Natural killer cell (primary cell): ENCODE measurements at regions of chr4 and their contacts with region 1.

Region 1: GRCh38 chr4:176340871-176341685 is 21.3 kb downstream of the SPCS3 start:
- DNase-seq: peak in 1 of 2 donors; percentile 73
- ATAC-seq: peak; percentile 53 to 72 (median 57)
- H3K4me3 ChIP-seq: no peak overlapping the region
- H3K4me3 Mint-ChIP-seq: no peak overlapping the region
- H3K27ac ChIP-seq: no peak overlapping the region
- H3K27ac Mint-ChIP-seq: no peak overlapping the region
- H3K4me1 ChIP-seq: no peaks in the 10 kb centered on the region
- H3K4me1 Mint-ChIP-seq: peaks cover 5 to 11% of the 10 kb centered on the region in 2 donors
- H3K27me3 ChIP-seq: no peaks in the 10 kb centered on the region
- H3K27me3 Mint-ChIP-seq: no peaks in the 10 kb centered on the region
- CTCF ChIP-seq: peak; percentile 66

Region 2: GRCh38 chr4:175947117-175947722 is 393.9 kb before region 1 on chr4:
- intact Hi-C with region 1: loop called (anchors 5 kb)
- DNase-seq: peak in 1 of 2 donors; percentile 39
- ATAC-seq: no peak
- H3K4me3 ChIP-seq: no peak overlapping the region
- H3K4me3 Mint-ChIP-seq: no peak overlapping the region
- H3K27ac ChIP-seq: no peak overlapping the region
- H3K27ac Mint-ChIP-seq: no peak overlapping the region
- H3K4me1 ChIP-seq: no peaks in the 10 kb centered on the region
- H3K4me1 Mint-ChIP-seq: peaks cover 5 to 10% of the 10 kb centered on the region in 2 donors
- H3K27me3 ChIP-seq: no peaks in the 10 kb centered on the region
- H3K27me3 Mint-ChIP-seq: no peaks in the 10 kb centered on the region
- CTCF ChIP-seq: peak; percentile 65

Region 3: GRCh38 chr4:176090115-176090514 is 251.0 kb before region 1 on chr4:
- intact Hi-C with region 1: no loop called
- DNase-seq: no peak
- ATAC-seq: no peak
- H3K4me3 ChIP-seq: no peak overlapping the region
- H3K4me3 Mint-ChIP-seq: no peak overlapping the region
- H3K27ac ChIP-seq: no peak overlapping the region
- H3K27ac Mint-ChIP-seq: no peak overlapping the region
- H3K4me1 ChIP-seq: no peaks in the 10 kb centered on the region
- H3K4me1 Mint-ChIP-seq: no peaks in the 10 kb centered on the region
- H3K27me3 ChIP-seq: no peaks in the 10 kb centered on the region
- H3K27me3 Mint-ChIP-seq: no peaks in the 10 kb centered on the region
- CTCF ChIP-seq: no peak